ENCODE measurements at regions of chr12 and their contacts with region 1.

Region 1: GRCh38 chr12:8544295-8544694 is 3.6 kb upstream of the CLEC4E start:
- DNase-seq: peak; percentile 82
- ATAC-seq: peak; percentile 80
- H3K4me3 Mint-ChIP-seq: no peak overlapping the region
- H3K27ac Mint-ChIP-seq: no peak overlapping the region
- H3K4me1 Mint-ChIP-seq: peaks cover 9% of the 10 kb centered on the region
- H3K27me3 Mint-ChIP-seq: peaks cover 31% of the 10 kb centered on the region
- CTCF ChIP-seq: peak; percentile 94

Region 2: DNA sequence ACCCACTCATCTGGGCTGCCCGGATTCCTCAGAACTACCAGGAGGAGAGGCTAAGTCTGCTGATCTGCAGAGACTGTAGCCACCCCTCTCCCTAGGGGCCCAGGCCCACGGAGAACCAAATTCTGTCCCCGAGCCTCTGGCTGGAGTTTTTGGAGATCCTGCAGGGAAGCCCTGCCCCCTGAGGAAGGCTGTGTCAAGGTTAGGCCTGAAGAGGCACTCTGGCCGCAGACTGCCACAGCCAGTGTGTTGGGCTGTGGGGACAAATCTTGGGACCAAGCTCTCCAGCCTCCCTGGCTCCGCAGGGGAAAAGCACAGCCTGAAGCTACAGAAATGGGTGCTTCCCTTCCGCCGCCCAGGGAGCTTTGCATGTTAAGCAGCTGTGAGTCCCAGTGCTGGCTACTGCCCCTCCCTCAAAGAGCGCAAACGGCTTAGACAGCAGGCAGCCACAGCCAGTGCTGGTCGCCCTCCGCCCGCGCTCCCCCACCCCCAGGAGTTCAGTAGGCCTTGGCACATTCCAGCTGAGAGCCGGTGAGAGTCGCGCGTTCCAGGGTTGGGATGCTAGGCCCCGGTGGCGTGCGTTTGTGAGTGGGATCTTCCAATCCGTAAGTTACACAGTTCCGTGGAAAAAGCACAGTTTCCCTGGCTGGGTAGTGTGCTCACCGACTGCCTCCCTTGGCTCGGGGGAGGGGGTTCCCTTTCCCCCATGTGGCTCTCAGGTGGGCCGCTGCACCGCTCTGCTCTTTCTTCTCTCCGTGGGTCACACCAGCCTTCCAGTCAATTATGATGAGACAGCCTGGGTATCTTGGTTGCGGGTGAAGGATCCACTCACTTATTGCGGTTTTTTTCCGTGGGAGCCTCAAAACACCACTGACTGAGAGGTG is 16.8 kb before region 1 on chr12:
- CTCF ChIA-PET with region 1: interaction called, 17 read pairs
- POLR2A ChIA-PET with region 1: no interaction called
- intact Hi-C with region 1: no loop called
- DNase-seq: no peak
- ATAC-seq: no peak
- H3K4me3 Mint-ChIP-seq: no peak overlapping the region
- H3K27ac Mint-ChIP-seq: no peak overlapping the region
- H3K4me1 Mint-ChIP-seq: no peaks in the 10 kb centered on the region
- H3K27me3 Mint-ChIP-seq: peaks cover 31% of the 10 kb centered on the region
- CTCF ChIP-seq: no peak

Region 3: GRCh38 chr12:8572507-8572906 is 28.2 kb after region 1 on chr12:
- CTCF ChIA-PET with region 1: interaction called, 11 read pairs
- POLR2A ChIA-PET with region 1: no interaction called
- intact Hi-C with region 1: no loop called
- DNase-seq: no peak
- ATAC-seq: no peak
- H3K4me3 Mint-ChIP-seq: no peak overlapping the region
- H3K27ac Mint-ChIP-seq: no peak overlapping the region
- H3K4me1 Mint-ChIP-seq: peaks cover 10% of the 10 kb centered on the region
- H3K27me3 Mint-ChIP-seq: no peaks in the 10 kb centered on the region
- CTCF ChIP-seq: no peak

Region 4: DNA sequence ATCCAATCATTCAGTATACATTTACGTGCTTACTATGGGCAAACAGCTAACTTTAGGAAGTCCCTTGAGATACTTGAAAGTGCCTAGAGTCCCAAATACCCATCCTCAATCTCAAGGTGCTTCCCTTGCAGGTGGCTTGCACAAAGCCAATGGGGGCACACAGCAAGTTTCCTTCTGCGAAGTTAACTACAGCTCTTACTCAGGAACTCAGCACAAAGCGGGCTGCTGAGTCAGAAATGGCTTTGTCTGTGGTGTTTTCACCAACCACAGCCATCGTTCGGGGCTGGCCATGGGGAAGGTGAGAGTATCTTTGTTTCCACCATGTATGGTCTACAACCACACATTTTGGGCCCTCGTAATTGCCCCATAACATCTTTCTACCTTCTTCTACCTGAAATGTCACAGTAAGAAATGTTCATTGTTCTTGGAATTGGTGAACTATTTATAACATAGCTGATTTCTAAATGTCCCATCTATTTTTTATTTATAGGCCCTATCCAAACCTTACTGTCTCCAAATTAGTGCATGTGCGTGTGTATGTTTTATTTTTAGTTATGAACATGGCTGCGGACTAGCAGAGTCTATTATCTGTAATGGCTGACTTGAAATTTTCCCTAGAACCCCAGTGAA is 104.4 kb after region 1 on chr12:
- CTCF ChIA-PET with region 1: interaction called, 21 read pairs
- POLR2A ChIA-PET with region 1: no interaction called
- intact Hi-C with region 1: no loop called
- DNase-seq: peak; percentile 94
- ATAC-seq: peak; percentile 76
- H3K4me3 Mint-ChIP-seq: no peak overlapping the region
- H3K27ac Mint-ChIP-seq: peak overlapping the region; percentile 66
- H3K4me1 Mint-ChIP-seq: peaks cover 56% of the 10 kb centered on the region
- H3K27me3 Mint-ChIP-seq: peaks cover 10% of the 10 kb centered on the region
- CTCF ChIP-seq: no peak

Region 5: DNA sequence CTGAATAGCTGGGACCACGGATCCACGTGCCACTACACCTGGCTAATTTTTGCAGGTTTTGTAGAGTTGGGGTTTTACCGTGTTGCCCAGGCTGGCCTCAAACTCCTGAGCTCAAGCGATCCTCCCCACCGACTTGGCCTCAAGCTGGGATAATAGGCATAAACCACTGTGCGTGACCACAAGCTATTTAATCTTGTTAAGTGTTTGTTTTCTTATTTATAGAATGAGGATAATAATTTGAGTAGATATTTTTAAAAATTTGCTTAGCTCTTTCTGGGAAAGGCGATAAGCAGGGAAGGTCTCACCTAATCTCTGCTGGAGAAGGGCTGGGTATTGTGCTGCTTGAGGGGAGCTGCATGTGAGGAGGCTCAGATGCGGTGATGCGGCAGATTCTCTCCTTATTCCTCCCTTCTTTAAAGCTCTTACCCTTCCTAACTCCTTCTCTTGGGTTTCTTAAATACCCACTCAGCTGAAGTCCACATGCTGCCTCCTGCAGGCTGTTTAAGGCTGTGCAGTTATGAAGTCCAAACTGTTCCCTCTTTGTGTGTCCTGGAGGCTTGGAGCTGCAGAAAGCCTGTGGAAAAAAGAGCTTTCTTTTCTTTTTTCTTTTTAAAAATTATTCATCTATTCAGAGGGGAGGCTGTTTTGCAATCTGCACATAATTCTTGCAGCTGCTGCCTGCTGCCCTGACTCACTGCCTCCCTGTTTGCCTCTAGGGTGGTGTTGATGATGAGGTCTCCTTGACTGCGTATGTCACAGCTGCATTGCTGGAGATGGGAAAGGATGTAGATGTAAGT is 316.1 kb after region 1 on chr12:
- CTCF ChIA-PET with region 1: interaction called, 18 read pairs
- POLR2A ChIA-PET with region 1: no interaction called
- intact Hi-C with region 1: no loop called
- DNase-seq: peak; percentile 50
- ATAC-seq: peak; percentile 58
- H3K4me3 Mint-ChIP-seq: no peak overlapping the region
- H3K27ac Mint-ChIP-seq: no peak overlapping the region
- H3K4me1 Mint-ChIP-seq: no peaks in the 10 kb centered on the region
- H3K27me3 Mint-ChIP-seq: no peaks in the 10 kb centered on the region
- CTCF ChIP-seq: peak; percentile 69